ENCODE measurements at regions of chr12 and their contacts with region 1.

Region 1: DNA sequence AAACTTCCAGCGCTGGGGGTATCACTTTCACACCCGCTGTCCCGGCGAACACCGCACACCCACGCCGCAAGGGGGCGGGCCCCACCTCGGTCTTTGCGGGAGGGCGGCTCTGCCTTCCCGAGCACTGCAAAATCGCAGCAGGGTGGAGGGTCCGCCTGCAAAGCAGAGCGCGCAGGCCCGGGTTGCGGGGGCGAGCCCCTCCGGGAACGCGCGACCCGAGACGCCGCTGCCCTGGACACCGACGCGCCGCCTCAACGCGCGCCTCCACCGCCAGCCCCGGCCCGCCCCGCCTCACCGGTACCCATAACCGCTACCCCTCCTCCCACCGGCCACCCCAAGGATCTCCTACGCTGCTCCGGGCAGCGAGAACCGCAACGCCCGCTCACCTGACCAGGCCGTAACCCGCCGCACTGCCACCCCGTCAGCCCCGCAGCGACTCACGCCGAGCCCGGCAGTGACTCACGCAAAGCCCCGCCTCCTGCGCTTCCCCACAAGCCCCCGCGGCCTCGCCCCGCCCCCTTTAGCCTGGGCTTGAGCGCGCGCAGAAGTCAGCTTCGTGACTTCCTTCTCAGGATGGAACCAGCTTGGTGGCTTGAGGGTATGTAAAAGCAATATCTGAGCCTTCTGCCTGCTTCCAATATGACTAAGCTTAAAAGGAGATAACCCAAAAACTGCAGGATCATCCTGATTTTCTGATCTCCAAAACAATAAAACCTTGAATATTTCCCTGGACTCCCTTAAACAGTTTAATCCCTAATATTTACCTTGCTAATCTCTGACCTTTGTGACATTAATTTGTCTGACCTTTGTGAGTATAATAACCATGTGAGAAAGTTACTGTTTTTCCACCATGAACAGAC is at the start of gene RPAP3:
- DNase-seq: peak; percentile 100
- ATAC-seq: peak; percentile 92
- H3K4me3 Mint-ChIP-seq: peak within 1 kb of the TSS; percentile 89
- H3K27ac Mint-ChIP-seq: peak within 1 kb of the TSS; percentile 99
- H3K4me1 Mint-ChIP-seq: peaks cover 46% of the 10 kb centered on the region
- H3K27me3 Mint-ChIP-seq: no peaks in the 10 kb centered on the region
- total RNA-seq, gene RPAP3: 55.3 to 62.8 TPM

Region 2: DNA sequence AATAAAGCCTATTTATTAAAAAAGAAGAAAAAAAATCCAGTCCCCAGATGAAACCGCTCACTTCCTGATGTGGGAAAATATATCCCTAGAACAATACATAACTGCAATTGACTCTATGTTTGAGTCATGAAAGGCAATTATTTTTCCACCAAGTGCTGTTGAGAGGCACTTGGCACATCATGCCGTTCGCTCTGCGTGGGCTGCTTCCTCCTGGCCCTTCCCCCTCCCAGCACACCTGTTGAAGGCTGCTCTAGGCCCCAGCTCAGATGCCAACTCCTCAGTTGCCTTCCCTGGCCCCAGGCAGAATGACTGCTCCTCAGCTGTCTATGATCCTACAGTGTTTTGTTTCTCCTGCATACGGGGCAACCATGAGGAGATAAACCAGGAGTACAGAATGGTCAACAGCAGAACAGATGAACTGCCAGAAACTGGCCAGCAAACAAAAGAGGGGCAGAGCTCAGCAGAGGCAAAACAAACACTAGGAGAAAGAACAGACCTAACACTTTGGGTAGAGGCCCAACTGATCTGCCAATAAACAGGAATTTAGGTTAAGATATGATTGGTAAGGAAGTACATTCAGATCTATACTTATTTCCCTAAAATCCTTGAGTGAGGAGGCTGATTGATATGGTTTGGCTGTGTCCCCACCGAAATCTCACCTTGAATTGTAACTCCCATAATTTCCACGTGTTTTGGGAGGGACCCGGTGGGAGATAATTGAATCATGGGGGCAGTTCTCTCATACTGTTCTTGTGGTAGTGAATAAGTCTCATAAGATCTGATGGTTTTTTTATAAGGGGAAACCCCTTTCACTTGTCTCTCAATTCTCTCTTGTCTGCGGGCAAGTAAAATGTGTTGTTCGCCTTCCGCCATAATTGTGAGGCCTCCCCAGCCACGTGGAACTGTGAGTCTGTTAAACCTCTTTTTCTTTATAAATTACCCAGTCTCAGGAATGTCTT is 1495.6 kb before region 1 on chr12:
- CTCF ChIA-PET with region 1: no interaction called
- POLR2A ChIA-PET with region 1: no interaction called
- intact Hi-C with region 1: loop called (anchors 10 kb)
- DNase-seq: peak; percentile 88
- ATAC-seq: peak; percentile 71
- H3K4me3 Mint-ChIP-seq: peak overlapping the region; percentile 58
- H3K27ac Mint-ChIP-seq: peak overlapping the region; percentile 97
- H3K4me1 Mint-ChIP-seq: peaks cover 79% of the 10 kb centered on the region
- H3K27me3 Mint-ChIP-seq: no peaks in the 10 kb centered on the region

Region 3: GRCh38 chr12:47356129-47356700 is 349.6 kb before region 1 on chr12:
- CTCF ChIA-PET with region 1: no interaction called
- POLR2A ChIA-PET with region 1: no interaction called
- intact Hi-C with region 1: loop called in 1 of 2 experiments (anchors 5 kb)
- DNase-seq: peak; percentile 61
- ATAC-seq: peak; percentile 74
- H3K4me3 Mint-ChIP-seq: peak overlapping the region; percentile 58
- H3K27ac Mint-ChIP-seq: peak overlapping the region; percentile 100
- H3K4me1 Mint-ChIP-seq: peaks cover 86% of the 10 kb centered on the region
- H3K27me3 Mint-ChIP-seq: no peaks in the 10 kb centered on the region

Region 4: GRCh38 chr12:47828608-47829536 is 123.1 kb after region 1 on chr12:
- CTCF ChIA-PET with region 1: interaction called, 3 read pairs
- POLR2A ChIA-PET with region 1: no interaction called
- intact Hi-C with region 1: loop called in 1 of 2 experiments (anchors 1 kb)
- DNase-seq: peak; percentile 55
- ATAC-seq: no peak
- H3K4me3 Mint-ChIP-seq: peak overlapping the region; percentile 71
- H3K27ac Mint-ChIP-seq: peak overlapping the region; percentile 92
- H3K4me1 Mint-ChIP-seq: peaks cover 91% of the 10 kb centered on the region
- H3K27me3 Mint-ChIP-seq: no peaks in the 10 kb centered on the region

Region 5: DNA sequence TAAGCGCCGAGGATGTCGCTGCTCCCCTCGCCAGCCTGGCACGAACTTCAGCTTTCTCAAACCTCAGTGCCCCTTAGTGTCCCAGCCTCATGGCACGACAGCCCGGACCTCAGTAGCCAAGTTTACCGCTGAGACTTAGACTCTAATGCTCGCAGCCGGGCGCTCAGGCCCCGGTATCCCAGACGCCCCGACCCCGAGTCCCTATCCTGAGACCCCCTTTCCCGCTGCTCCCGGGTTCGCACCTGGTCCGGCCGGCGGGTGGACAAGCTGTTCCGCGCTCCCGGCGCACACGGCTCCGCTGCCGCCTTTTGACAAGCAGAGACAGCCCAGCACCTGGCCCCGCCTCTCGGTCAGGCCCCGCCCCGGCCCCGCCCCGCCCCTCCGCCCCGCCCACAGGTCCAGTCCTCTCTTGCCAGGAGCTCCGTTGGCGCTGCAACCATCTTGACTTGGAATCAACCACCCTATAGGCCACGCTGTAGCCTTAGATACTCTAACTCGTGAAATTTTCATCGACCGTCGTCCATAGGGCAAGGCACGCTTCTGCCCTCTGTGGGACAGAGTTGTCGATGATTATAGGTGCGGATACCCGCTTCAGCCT is 199.0 kb after region 1 on chr12 and contains the start of gene VDR:
- CTCF ChIA-PET with region 1: interaction called, 3 read pairs
- POLR2A ChIA-PET with region 1: interaction called, 6 read pairs
- intact Hi-C with region 1: loop called in 1 of 2 experiments (anchors 1 kb)
- DNase-seq: peak; percentile 88
- ATAC-seq: peak; percentile 76
- H3K4me3 Mint-ChIP-seq: peak within 1 kb of the TSS; percentile 94
- H3K27ac Mint-ChIP-seq: peak within 1 kb of the TSS; percentile 92
- H3K4me1 Mint-ChIP-seq: peaks cover 45% of the 10 kb centered on the region
- H3K27me3 Mint-ChIP-seq: peaks cover 20% of the 10 kb centered on the region
- total RNA-seq, gene VDR: 108 to 124 TPM

Region 6: DNA sequence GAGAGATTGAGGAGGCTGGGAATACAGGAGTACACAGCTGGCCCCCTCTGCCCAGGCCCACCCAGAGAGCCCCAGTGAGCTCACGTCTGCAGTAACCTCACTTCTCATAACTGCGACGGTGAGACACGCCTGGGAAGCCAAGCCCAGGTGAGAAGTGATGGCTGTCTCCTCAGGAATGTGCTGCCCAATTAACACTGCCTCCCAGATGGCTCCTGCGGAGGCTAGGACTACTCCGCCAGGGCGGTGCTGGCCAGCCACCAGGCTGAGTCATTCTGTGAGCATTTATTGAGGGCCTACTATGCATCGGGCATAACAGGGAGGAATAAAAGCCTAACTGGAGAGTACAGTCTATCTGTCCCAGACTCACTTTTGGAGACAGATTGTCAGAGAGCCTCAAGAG is 248.3 kb after region 1 on chr12:
- CTCF ChIA-PET with region 1: no interaction called
- POLR2A ChIA-PET with region 1: no interaction called
- intact Hi-C with region 1: no loop called
- DNase-seq: no peak
- ATAC-seq: no peak
- H3K4me3 Mint-ChIP-seq: no peak overlapping the region
- H3K27ac Mint-ChIP-seq: no peak overlapping the region
- H3K4me1 Mint-ChIP-seq: peaks cover 6% of the 10 kb centered on the region
- H3K27me3 Mint-ChIP-seq: no peaks in the 10 kb centered on the region

Region 7: DNA sequence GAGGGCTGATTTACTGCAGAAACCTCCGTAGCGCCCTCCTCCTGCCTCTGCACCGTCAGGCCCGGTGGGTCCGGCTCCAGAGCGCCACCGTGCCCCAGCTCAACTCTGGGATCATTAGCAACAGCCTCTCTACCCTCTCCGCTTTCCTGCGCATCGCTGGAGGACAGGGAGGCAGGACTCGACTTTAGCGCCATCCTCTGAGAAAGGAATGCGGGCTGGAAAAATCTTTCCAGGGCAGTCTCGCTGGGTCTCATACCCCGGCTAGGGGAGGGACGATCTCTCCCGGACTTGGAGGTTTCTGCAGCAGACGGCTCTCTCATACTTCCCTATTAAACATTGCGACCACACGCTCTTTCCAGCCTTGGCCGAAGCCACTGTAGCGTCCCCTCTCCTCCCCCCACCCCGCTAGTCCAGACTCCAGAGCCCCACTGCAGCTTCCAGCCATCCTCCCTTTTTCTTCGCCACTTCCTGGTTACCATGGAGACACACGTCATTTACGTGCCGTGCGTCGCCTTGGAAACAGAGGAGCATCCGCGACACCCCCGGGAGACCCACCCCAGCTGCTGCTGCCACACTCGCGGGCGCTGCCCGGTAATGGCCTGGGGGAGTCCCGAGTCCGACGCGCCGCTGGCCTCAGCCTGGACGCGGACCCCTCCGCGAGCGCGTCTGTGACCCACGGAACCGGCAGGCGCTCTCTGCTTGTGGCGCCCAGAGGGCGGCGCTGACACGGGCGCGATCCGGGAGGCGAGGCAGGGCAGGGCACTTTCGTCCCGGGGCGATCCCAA is 477.5 kb after region 1 on chr12 and contains the start of gene CCDC184:
- CTCF ChIA-PET with region 1: no interaction called
- POLR2A ChIA-PET with region 1: no interaction called
- intact Hi-C with region 1: loop called in 1 of 2 experiments (anchors 10 kb)
- DNase-seq: peak; percentile 78
- ATAC-seq: peak; percentile 80
- H3K4me3 Mint-ChIP-seq: peak within 1 kb of the TSS; percentile 81
- H3K27ac Mint-ChIP-seq: peak within 1 kb of the TSS; percentile 31
- H3K4me1 Mint-ChIP-seq: peaks cover 20% of the 10 kb centered on the region
- H3K27me3 Mint-ChIP-seq: peaks cover 34% of the 10 kb centered on the region
- total RNA-seq, gene CCDC184: 0.25 to 0.37 TPM

Measured in activated CD4-positive, alpha-beta T cell treated with anti-CD3 and anti-CD28 coated beads for 36 hours (primary cell).